Activated T-helper 1 cell treated with anti-CD3 and anti-CD28 coated beads, Interleukin-12 subunit alpha, Interleukin-12 subunit beta, Interleukin-2, Interleukin-4 antibody, amounts not matched to agents 30 ng/mL and 10 ng/mL and 1 ng/mL, durations not matched to agents 14 hours and 24 hours and 36 hours (primary cell): ENCODE measurements at regions of chr6 and their contacts with region 1.

Region 1: GRCh38 chr6:41941280-41942066 is at the start of gene CCND3:
- DNase-seq: peak; percentile 89
- H3K4me3 Mint-ChIP-seq: peak within 1 kb of the TSS; percentile 99
- H3K27ac Mint-ChIP-seq: peak within 1 kb of the TSS; percentile 94
- H3K4me1 Mint-ChIP-seq: peaks cover 43% of the 10 kb centered on the region
- H3K27me3 Mint-ChIP-seq: no peaks in the 10 kb centered on the region
- total RNA-seq, gene CCND3: 351 and 356 TPM in 2 replicates

Region 2: GRCh38 chr6:42009966-42010891 is 68.8 kb after region 1 on chr6:
- intact Hi-C with region 1: loop called (anchors 2 kb)
- DNase-seq: no peak
- H3K4me3 Mint-ChIP-seq: peak overlapping the region; percentile 37
- H3K27ac Mint-ChIP-seq: peak overlapping the region; percentile 87
- H3K4me1 Mint-ChIP-seq: peaks cover 72% of the 10 kb centered on the region
- H3K27me3 Mint-ChIP-seq: no peaks in the 10 kb centered on the region